ENCODE measurements at regions of chr6 and their contacts with region 1.

Region 1: DNA sequence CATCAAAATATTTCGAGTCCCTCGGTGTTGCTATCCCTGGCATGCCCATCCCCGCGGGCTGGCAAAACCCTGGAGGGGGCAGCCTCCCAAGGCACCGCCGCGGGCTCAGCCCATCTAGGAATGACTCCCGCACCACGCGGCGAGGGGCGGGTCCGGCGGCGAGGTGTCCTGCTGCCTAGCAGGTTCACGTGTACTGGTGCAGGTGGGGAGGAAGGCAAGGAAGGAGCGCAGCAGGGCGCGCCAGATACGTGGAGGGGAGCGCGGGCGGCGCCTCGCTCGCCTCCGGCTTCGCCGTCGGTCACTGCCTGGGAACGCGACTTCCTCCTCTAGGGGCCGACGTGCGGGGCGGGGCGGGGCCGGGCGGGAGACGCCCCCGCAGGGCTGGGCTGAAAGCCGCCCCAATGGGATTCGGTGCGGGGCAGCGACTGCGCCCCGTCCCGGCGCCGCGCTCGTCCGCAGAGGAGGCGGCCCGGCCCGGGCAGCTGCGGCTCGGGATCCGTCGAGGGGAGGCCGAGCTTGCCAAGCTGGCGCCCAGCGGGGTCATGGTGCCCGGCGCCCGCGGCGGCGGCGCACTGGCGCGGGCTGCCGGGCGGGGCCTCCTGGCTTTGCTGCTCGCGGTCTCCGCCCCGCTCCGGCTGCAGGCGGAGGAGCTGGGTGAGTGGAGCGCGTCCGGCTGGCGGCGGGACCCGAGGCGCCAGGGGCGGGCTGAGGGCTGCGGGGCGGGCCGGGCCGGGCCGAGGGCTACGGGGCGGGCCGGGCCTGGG is at the start of gene DCBLD1:
- DNase-seq: peak; percentile 83
- ATAC-seq: peak; percentile 95 to 97
- total RNA-seq, gene DCBLD1: 4.1 to 8.2 TPM

Region 2: GRCh38 chr6:117549611-117550010 is 67.2 kb after region 1 on chr6:
- intact Hi-C with region 1: loop called (anchors 2 to 10 kb)
- DNase-seq: no peak
- ATAC-seq: no peak

Region 3: DNA sequence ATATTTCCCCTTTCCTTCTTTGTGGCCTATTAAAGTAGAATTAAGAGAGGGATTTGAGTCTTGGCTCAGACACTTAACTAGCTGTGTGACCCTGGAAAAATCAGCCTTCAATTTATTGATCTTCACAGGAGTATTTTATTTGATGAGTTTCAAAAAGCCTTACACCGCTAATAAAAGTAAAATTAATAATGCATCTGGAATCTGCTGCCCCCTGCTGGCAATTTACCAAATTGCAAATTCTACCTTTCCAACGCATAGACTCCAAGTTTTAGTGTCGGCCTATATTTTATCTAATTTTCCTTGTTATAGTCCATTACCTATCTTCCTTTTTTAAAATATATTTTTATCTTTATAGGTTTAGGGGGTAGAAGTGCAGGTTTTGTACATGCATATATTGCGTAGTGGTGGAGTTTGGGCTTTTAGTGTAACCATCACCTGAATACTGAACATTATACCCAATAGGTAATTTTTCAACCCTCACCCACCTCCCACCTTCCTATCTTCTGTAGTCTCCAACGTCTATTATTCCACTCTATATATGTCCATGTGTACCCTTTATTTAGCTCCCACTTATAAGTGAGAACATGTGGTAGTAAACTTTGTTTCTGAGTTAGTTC is 73.6 kb after region 1 on chr6:
- intact Hi-C with region 1: loop called (anchors 2 to 10 kb)
- DNase-seq: peak; percentile 31
- ATAC-seq: no peak

Region 4: DNA sequence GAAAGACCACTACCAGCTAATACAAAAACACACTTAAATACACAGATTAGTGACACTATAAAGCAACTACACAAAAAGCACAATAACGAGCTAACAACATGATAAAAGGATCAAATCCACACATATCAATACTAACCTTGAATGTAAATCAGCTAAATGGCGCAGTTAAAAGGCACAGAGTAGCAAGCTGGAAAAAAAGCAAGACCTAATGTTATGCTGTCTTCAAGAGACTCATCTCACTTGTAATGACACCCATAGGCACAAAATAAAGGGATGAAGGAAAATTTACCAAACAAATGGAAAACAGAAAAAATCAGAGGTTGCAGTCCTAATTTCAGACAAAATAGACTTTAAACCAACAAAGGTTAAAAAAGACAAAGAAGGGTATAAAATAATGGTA is 279.2 kb after region 1 on chr6:
- intact Hi-C with region 1: no loop called
- DNase-seq: no peak
- ATAC-seq: no peak